ENCODE measurements at regions of chr1 and their contacts with region 1.

Region 1: GRCh38 chr1:43554444-43554992 is 23.8 kb downstream of the PTPRF start:
- DNase-seq: peak; percentile 46
- ATAC-seq: peak; percentile 7
- H3K4me3 Mint-ChIP-seq: no peak overlapping the region
- H3K27ac Mint-ChIP-seq: peak overlapping the region; percentile 84
- H3K4me1 Mint-ChIP-seq: peaks cover 41% of the 10 kb centered on the region
- H3K27me3 Mint-ChIP-seq: no peaks in the 10 kb centered on the region
- CTCF ChIP-seq: 0 out of 2 replicates have a peak, but pooled peaks have one; percentile 24

Region 2: GRCh38 chr1:43529206-43529731 is 25.2 kb before region 1 on chr1:
- CTCF ChIA-PET with region 1: interaction called, 27 read pairs
- POLR2A ChIA-PET with region 1: interaction called, 24 read pairs
- DNase-seq: peak; percentile 89
- ATAC-seq: peak; percentile 45
- H3K4me3 Mint-ChIP-seq: peak overlapping the region; percentile 91
- H3K27ac Mint-ChIP-seq: no peak overlapping the region
- H3K4me1 Mint-ChIP-seq: peaks cover 36% of the 10 kb centered on the region
- H3K27me3 Mint-ChIP-seq: peaks cover 10% of the 10 kb centered on the region
- CTCF ChIP-seq: peak; percentile 85

Region 3: GRCh38 chr1:43573066-43573800 is 18.7 kb after region 1 on chr1:
- CTCF ChIA-PET with region 1: interaction called, 11 read pairs
- POLR2A ChIA-PET with region 1: no interaction called
- DNase-seq: no peak
- ATAC-seq: no peak
- H3K4me3 Mint-ChIP-seq: no peak overlapping the region
- H3K27ac Mint-ChIP-seq: peak overlapping the region; percentile 65; the same call in 1 of the 2 replicates
- H3K4me1 Mint-ChIP-seq: peaks cover 8% of the 10 kb centered on the region
- H3K27me3 Mint-ChIP-seq: no peaks in the 10 kb centered on the region
- CTCF ChIP-seq: no peak

Region 4: GRCh38 chr1:43590389-43590925 is 35.9 kb after region 1 on chr1:
- CTCF ChIA-PET with region 1: interaction called, 16 read pairs
- POLR2A ChIA-PET with region 1: interaction called, 3 read pairs
- DNase-seq: peak; percentile 36
- ATAC-seq: peak; percentile 90
- H3K4me3 Mint-ChIP-seq: no peak overlapping the region
- H3K27ac Mint-ChIP-seq: peak overlapping the region; percentile 96
- H3K4me1 Mint-ChIP-seq: no peaks in the 10 kb centered on the region
- H3K27me3 Mint-ChIP-seq: no peaks in the 10 kb centered on the region
- CTCF ChIP-seq: peak; percentile 24; the same call in 1 of the 2 replicates

Region 5: DNA sequence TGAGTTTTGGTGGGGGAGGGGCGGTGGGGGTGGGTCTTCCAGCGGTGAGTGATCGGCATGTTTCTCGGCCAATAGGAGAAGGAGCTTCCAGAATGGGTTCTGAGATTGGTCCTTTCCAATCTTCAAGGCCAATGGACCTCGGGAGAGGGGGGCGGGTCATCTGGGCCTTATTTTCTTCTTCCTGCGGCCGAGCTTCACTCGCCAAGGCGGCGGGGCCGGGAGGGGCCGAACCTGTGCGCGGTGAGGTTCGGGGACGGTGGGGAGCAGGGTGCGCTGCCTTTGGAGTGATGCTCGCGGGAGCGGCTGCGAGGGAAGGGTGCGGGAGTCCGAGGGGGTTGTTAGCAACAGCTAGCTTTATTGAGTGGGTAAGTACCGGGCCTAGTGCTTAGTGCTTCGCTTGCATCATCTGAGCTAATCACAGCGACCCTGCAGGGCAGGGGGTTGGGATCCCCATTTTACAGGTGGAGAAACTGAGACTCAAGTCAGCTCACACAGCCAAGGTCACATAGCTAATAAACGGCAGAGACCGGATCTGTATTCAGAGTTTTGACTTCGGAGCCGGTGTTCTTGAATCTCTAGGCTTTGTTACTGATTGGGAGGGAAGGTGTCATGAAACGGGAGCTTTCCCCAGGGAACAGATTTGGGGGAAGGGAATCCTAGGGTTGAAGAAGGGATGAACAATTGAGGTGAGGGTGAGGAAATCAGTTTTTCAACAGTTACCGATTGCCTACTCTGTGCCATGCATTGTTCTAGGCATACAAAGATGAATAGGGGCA is 96.0 kb after region 1 on chr1:
- CTCF ChIA-PET with region 1: interaction called, 14 read pairs
- POLR2A ChIA-PET with region 1: interaction called, 12 read pairs
- DNase-seq: peak; percentile 97
- ATAC-seq: peak; percentile 73
- H3K4me3 Mint-ChIP-seq: peak overlapping the region; percentile 96
- H3K27ac Mint-ChIP-seq: peak overlapping the region; percentile 100
- H3K4me1 Mint-ChIP-seq: peaks cover 35% of the 10 kb centered on the region
- H3K27me3 Mint-ChIP-seq: peaks cover 5% of the 10 kb centered on the region
- CTCF ChIP-seq: no peak

Measured in WTC11 (cell line).